A673 (cell line): ENCODE measurements at regions of chr6 and their contacts with region 1.

Region 1: DNA sequence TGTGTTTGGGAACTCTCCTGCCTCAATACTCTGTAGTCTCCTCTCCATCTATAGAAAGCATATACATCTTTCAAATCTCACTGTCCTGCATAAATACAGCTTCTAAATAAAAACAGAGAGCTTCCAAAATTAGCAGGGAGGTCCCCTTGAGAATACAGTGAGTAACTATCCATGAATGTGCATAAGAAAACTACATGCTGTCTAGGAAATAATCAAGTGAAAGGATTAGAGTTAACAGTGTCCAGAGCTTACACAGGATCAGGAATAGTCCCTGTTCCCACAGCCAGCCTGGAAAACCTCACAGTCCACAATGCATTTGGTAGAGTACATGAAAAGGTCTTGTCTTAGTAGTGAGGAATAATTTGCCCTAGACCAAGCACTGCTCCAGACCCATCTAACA is 123.0 kb upstream of the POU3F2 start:
- DNase-seq: no peak
- H3K4me3 ChIP-seq: no peak overlapping the region
- H3K27ac ChIP-seq: no peak overlapping the region
- H3K4me1 ChIP-seq: no peaks in the 10 kb centered on the region
- H3K27me3 ChIP-seq: no peaks in the 10 kb centered on the region
- CTCF ChIP-seq: no peak

Region 2: GRCh38 chr6:98634569-98634968 is 76.8 kb before region 1 on chr6:
- CTCF ChIA-PET with region 1: no interaction called
- POLR2A ChIA-PET with region 1: interaction called, 10 read pairs
- intact Hi-C with region 1: no loop called
- DNase-seq: no peak
- H3K4me3 ChIP-seq: no peak overlapping the region
- H3K27ac ChIP-seq: no peak overlapping the region
- H3K4me1 ChIP-seq: peaks cover 6% of the 10 kb centered on the region
- H3K27me3 ChIP-seq: no peaks in the 10 kb centered on the region
- CTCF ChIP-seq: no peak